ENCODE measurements at regions of chr12 and their contacts with region 1.

Region 1: GRCh38 chr12:9049520-9050133 is 60.3 kb downstream of the KLRG1 start:
- DNase-seq: no peak
- ATAC-seq: peak in 1 of 2 donors; percentile 60

Region 2: GRCh38 chr12:8544295-8544694 is 505.3 kb before region 1 on chr12:
- intact Hi-C with region 1: loop called in 1 of 2 experiments (anchors 10 kb)
- DNase-seq: peak; percentile 44
- ATAC-seq: peak; percentile 59

Region 3: DNA sequence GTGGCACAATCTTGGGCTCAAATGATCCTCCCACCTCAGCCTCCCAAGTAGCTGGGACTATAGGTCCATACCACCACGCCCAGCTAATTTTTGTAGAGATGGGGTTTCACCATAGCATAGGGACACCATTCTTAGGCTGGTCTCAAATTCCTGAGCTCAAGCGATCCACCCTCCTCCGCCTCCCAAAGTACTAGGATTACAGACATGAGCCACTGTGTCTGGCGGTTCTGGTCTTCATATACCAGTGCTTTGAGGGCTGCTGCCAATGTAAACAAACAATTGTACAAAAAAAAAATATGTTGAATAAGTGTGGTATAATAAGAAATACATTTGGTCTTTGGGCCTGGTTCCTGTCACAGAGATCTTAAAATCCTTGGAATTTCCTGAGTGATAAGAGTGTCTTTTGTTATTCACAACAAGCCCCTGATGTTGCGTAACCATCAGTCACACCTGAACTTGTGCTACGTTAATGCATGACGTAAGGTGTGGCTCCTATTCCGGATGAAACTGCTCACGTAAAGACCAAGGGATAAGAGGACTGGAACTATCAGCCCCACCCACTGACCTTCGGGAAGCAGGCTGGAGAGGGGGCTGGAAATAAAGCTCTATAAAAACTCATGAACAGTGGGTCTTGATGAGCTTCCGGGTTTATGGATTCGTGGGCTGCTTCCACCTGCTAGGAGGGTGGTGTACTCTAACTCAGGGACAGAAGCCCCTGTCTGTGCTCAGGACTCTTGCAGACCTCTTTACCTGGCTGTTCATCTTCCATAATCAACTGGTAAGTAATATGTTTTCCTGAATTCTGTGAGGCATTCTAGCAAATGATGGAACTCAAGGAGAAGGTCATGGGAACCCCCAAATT is 368.4 kb before region 1 on chr12:
- intact Hi-C with region 1: loop called (anchors 5 to 10 kb)
- DNase-seq: no peak
- ATAC-seq: peak; percentile 33 to 72

Region 4: DNA sequence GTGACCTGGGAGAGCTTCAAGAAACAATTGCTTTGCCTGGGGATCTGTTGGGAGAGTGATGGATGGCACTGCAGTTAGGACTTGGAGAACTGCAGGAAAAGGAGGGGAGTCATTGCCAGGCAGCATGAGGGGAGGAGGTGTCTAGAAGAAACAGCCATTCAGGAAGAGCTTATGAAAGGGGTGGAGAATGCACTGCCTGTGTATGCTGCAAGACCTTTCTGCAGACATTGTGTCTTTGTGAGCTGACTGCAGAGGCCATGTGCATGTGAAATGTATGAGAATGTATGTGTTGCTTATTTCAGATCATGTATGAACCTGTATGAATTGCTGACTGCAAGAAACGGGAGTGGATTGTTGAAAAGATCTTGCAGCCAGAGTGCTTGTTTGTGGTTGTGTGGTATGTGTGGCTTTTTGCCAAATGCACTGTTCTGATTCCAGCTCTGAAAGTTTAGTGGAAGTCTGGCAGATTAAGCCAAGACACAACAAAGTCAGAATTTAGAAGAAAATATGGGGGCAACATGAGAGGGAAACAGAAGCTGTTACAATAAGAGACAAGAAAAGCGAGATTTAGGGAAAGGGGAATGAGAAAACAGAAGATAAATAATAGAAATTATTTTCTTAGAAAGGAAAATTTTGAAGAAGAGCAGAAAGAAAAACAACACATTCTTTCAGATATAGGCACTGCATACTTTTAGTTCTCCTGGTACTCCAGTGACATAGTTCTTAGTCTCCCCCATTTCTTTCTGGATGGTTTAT is 361.6 kb before region 1 on chr12:
- intact Hi-C with region 1: loop called (anchors 5 to 10 kb)
- DNase-seq: peak; percentile 35
- ATAC-seq: peak; percentile 95 to 98

Region 5: DNA sequence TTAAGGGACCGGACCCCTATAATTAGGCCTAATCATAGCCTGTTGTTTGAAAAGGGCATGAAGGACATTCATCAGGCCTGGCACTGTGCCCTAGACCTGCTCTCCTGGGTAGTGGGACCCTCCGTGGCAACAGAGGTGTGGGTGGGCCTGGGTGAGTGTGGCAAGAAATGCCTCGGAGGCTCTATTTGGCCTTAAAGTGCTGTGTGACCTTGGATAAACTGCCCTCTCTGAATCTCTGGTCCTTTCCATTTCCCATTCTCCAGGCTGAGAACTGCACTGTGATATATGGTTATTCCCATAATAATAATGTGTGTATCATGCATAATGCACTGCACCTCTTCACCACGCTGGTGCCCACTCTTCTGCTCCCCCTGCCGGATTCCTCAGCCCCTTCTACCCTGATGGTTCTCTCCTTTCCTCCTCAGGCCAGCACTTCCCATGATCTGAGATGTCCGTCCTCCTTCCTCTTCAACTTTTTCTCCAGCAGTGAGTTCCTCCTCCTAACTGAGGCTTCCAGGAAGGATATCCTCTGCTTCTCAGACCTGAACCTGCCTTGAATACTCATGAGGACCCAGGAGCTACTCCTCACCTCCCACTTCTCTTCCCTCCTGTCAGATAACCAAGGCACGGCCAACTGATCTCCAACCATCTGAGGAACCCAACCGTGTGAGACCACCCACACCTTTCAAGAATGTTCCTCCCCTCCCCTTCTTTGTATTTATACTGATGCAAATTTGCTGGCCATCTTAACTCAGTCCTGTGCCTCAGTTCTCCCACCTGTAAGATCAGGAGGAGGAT is 269.6 kb after region 1 on chr12:
- intact Hi-C with region 1: no loop called
- DNase-seq: no peak
- ATAC-seq: peak; percentile 27 to 77

Region 6: DNA sequence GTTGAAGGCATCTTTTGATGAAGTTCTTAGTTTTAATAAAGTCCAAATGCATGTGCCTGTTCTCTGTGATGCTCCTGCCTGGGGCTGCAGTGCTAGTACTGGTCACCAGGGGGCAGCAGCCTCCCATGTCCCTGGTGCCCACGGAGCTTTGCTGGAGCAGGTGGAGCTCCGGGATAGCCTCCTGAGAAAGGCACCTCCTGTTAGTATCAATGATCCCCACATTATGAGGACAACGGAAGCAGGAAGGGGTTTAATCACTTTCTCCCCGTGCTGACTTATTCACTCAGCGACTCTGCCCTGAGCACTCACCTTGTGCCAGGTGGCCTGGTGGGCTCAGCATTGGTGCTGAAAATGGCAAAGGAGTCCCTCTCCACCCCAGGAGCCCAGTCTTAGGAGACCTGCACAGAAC is 281.6 kb after region 1 on chr12:
- intact Hi-C with region 1: no loop called
- DNase-seq: peak; percentile 64
- ATAC-seq: peak; percentile 62 to 72

Measured in left cardiac atrium (tissue), 4 donors.